ENCODE measurements at regions of chr10 and their contacts with region 1.

Region 1: DNA sequence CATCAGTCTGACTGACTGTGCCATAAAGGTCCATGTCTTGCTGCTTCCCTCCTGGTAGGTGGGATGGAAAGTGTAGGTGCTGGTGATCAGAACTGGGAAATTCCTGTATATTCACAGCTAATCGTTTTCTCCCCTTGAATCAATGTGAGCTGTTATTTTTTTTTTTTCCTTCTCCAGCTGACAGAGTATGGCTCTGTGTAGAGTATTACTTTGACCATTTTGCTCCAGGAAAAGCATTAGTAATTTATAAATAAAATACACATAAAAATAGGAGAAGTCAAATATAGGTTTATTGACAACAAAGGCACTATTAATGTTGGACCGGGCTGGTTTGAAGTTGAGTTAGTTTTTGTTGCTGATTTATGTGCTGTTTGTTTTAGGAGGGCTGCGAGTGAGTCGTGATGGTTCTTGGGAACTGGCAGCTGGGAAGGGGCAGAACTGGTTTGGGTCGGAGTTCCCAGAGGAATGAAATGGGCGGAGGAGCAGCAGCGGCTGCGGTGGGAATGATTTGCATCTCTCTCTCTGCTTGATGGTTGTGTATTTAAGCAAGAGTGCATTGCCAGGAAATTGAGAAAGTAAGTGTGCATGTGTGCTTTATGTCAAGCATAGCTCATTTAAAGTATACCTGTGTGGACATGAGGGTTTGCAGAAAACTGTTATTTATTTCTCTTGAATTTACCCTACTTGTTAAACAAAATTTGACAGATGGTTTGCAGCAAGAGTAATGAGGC is 80.9 kb downstream of the LRMDA start:
- DNase-seq: no peak
- H3K4me3 ChIP-seq: no peak overlapping the region
- H3K4me3 Mint-ChIP-seq: peak overlapping the region in 1 of 2 donors; percentile 17
- H3K27ac ChIP-seq: no peak overlapping the region
- H3K27ac Mint-ChIP-seq: peak overlapping the region in 2 of 7 donors; percentile 36 to 78
- H3K4me1 ChIP-seq: peaks cover 57 to 75% of the 10 kb centered on the region in 2 donors
- H3K4me1 Mint-ChIP-seq: peaks cover 88% of the 10 kb centered on the region
- H3K27me3 ChIP-seq: no peaks in the 10 kb centered on the region
- H3K27me3 Mint-ChIP-seq: peaks cover 0 to 2% (median 2%) of the 10 kb centered on the region in 3 donors
- CTCF ChIP-seq: no peak

Region 2: DNA sequence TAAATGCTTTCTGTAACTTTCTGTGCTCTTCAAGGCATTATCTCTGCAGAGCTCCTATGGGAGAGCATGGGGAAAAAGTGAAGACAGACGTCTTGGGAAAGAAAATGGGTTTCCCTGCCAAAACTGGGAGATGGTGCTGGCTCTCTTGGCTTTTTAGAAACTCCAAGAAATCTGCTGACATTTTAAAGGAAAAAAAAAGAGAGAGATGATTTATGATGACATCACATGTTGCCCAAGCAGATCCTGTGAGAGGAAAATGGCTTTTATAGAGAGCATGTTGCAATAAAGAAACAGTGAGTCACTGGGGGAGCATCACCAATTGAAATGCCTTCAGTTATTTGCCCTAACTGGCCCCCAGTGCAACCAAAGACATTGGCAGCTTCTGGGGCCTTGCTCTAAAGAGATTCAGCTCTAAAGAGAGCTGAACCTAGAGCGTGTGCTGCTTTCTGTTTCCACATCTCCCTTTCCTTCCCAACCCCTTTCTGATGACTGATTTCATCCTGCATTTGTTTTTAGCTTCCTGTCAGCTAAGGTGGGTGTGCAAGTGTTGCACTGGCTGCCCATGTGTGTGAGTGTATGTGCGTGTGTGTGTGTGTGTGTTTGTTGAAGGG is 43.3 kb before region 1 on chr10:
- intact Hi-C with region 1: loop called in 1 of 2 experiments (anchors 10 kb)
- DNase-seq: peak; percentile 87 to 95 (median 95)
- H3K4me3 ChIP-seq: peak overlapping the region in 1 of 3 experiments; percentile 26
- H3K4me3 Mint-ChIP-seq: no peak overlapping the region
- H3K27ac ChIP-seq: peak overlapping the region; percentile 36 to 73
- H3K27ac Mint-ChIP-seq: peak overlapping the region; percentile 74 to 94 (median 91)
- H3K4me1 ChIP-seq: peaks cover 45 to 51% of the 10 kb centered on the region in 2 donors
- H3K4me1 Mint-ChIP-seq: peaks cover 59% of the 10 kb centered on the region
- H3K27me3 ChIP-seq: no peaks in the 10 kb centered on the region
- H3K27me3 Mint-ChIP-seq: no peaks in the 10 kb centered on the region
- CTCF ChIP-seq: no peak

Region 3: GRCh38 chr10:75487087-75487754 is 25.1 kb before region 1 on chr10:
- intact Hi-C with region 1: no loop called
- DNase-seq: no peak
- H3K4me3 ChIP-seq: no peak overlapping the region
- H3K4me3 Mint-ChIP-seq: no peak overlapping the region
- H3K27ac ChIP-seq: no peak overlapping the region
- H3K27ac Mint-ChIP-seq: no peak overlapping the region
- H3K4me1 ChIP-seq: peaks cover 8 to 11% of the 10 kb centered on the region in 2 donors
- H3K4me1 Mint-ChIP-seq: peaks cover 16% of the 10 kb centered on the region
- H3K27me3 ChIP-seq: no peaks in the 10 kb centered on the region
- H3K27me3 Mint-ChIP-seq: no peaks in the 10 kb centered on the region
- CTCF ChIP-seq: no peak

Region 4: GRCh38 chr10:75612904-75613684 is 100.7 kb after region 1 on chr10:
- intact Hi-C with region 1: loop called in 1 of 2 experiments (anchors 5 kb)
- DNase-seq: peak; percentile 77 to 87 (median 85)
- H3K4me3 ChIP-seq: peak overlapping the region in 1 of 3 experiments; percentile 61
- H3K4me3 Mint-ChIP-seq: peak overlapping the region; percentile 42 to 79
- H3K27ac ChIP-seq: peak overlapping the region; percentile 14 to 79
- H3K27ac Mint-ChIP-seq: peak overlapping the region; percentile 83 to 95 (median 91)
- H3K4me1 ChIP-seq: peaks cover 63 to 79% of the 10 kb centered on the region in 2 donors
- H3K4me1 Mint-ChIP-seq: peaks cover 74% of the 10 kb centered on the region
- H3K27me3 ChIP-seq: no peaks in the 10 kb centered on the region
- H3K27me3 Mint-ChIP-seq: no peaks in the 10 kb centered on the region
- CTCF ChIP-seq: no peak

Measured in CD14-positive monocyte (primary cell).